Endothelial cell of umbilical vein (primary cell): ENCODE measurements at regions of chr20 and their contacts with region 1.

Region 1: DNA sequence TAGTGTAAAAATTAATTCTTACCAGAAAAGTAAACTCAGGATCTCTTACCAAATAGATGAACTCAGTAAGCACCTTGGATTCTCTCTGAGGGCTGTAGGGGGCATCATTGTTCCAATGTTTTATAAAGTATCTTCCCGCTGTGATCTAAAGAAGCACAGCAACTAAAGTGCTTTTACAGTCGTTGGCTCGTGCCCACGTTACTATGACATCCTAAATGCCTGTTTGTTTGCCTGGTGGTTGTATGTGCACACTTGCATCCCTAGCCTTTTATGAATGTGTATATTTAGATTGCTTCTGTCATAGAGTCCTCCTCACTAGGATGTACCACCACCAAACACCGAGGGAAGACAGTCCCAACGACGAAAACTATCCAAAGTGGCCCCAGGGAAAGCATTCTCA is 34.5 kb downstream of the SLX4IP start:
- DNase-seq: peak; percentile 90
- H3K4me3 ChIP-seq: no peak overlapping the region
- H3K27ac ChIP-seq: peak overlapping the region; percentile 9
- H3K4me1 ChIP-seq: peaks cover 40% of the 10 kb centered on the region
- H3K27me3 ChIP-seq: no peaks in the 10 kb centered on the region
- CTCF ChIP-seq: peak; percentile 49 to 50
- POLR2A ChIP-seq: no peak

Region 2: GRCh38 chr20:10434832-10435812 is 34.5 kb before region 1 on chr20 and contains the start of gene SLX4IP:
- CTCF ChIA-PET with region 1: interaction called, 7 read pairs
- POLR2A ChIA-PET with region 1: interaction called, 3 read pairs
- dilution Hi-C with region 1: no loop called
- intact Hi-C with region 1: loop called (anchors 1 kb)
- DNase-seq: peak; percentile 95
- H3K4me3 ChIP-seq: peak within 1 kb of the TSS; percentile 96 to 99 (median 97)
- H3K27ac ChIP-seq: peak within 1 kb of the TSS; percentile 97
- H3K4me1 ChIP-seq: peaks cover 15% of the 10 kb centered on the region
- H3K27me3 ChIP-seq: no peaks in the 10 kb centered on the region
- CTCF ChIP-seq: no peak
- POLR2A ChIP-seq: peak; percentile 63
- total RNA-seq, gene SLX4IP: 4.1 and 4.5 TPM in 2 replicates

Region 3: GRCh38 chr20:10449270-10449669 is 20.3 kb before region 1 on chr20:
- CTCF ChIA-PET with region 1: no interaction called
- POLR2A ChIA-PET with region 1: no interaction called
- dilution Hi-C with region 1: no loop called
- intact Hi-C with region 1: no loop called
- DNase-seq: no peak
- H3K4me3 ChIP-seq: no peak overlapping the region
- H3K27ac ChIP-seq: no peak overlapping the region
- H3K4me1 ChIP-seq: peaks cover 3% of the 10 kb centered on the region
- H3K27me3 ChIP-seq: no peaks in the 10 kb centered on the region
- CTCF ChIP-seq: no peak
- POLR2A ChIP-seq: no peak

Region 4: DNA sequence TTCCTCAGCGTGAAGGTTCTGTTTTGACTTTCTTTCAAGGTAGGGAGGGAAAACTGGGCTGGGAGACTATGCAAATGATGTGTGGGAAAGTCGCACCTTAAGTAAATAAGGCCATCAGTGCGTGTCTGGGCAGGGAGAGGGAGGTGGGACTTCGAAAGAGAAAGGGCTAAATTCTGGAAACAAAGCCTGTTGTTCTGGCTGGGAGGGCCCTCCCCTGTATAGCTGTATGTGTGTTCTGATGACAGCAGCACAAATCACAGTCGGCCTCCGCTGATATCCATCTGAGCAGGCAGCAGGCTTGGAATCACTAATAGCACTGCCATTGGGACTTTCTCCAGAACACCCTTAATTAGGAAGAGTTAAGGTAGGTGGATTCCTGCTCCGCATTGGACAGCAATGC is 185.0 kb after region 1 on chr20:
- CTCF ChIA-PET with region 1: no interaction called
- POLR2A ChIA-PET with region 1: no interaction called
- dilution Hi-C with region 1: no loop called
- intact Hi-C with region 1: loop called (anchors 5 kb)
- DNase-seq: peak; percentile 56
- H3K4me3 ChIP-seq: no peak overlapping the region
- H3K27ac ChIP-seq: peak overlapping the region; percentile 27
- H3K4me1 ChIP-seq: peaks cover 30% of the 10 kb centered on the region
- H3K27me3 ChIP-seq: no peaks in the 10 kb centered on the region
- CTCF ChIP-seq: no peak
- POLR2A ChIP-seq: no peak

Region 5: DNA sequence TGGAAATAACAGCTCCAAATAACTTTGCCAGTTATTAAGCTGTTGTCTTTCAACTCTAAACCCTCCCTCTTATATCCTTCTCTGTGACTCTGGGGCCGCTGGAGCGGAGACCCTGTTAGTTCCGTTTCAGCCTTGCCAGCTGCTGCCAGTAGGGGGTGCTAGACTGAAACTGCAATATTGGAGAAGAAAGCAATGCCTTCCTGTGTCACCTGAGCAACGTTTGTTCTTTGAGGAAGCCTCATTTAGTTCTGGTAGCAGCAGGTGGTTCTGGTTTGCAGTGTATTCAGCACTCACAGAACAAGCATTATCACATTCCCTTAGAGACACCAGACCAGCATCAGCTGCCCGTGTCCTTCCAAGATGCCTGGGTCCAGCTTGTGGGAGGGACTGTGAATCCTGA is 227.1 kb after region 1 on chr20:
- CTCF ChIA-PET with region 1: no interaction called
- POLR2A ChIA-PET with region 1: no interaction called
- dilution Hi-C with region 1: no loop called
- intact Hi-C with region 1: no loop called
- DNase-seq: no peak
- H3K4me3 ChIP-seq: no peak overlapping the region
- H3K27ac ChIP-seq: no peak overlapping the region
- H3K4me1 ChIP-seq: no peaks in the 10 kb centered on the region
- H3K27me3 ChIP-seq: no peaks in the 10 kb centered on the region
- CTCF ChIP-seq: peak; percentile 37 to 42
- POLR2A ChIP-seq: no peak

Region 6: GRCh38 chr20:11274141-11274594 is 804.6 kb after region 1 on chr20:
- CTCF ChIA-PET with region 1: interaction called, 3 read pairs
- POLR2A ChIA-PET with region 1: no interaction called
- dilution Hi-C with region 1: no loop called
- intact Hi-C with region 1: loop called (anchors 1 kb)
- DNase-seq: peak; percentile 74
- H3K4me3 ChIP-seq: no peak overlapping the region
- H3K27ac ChIP-seq: no peak overlapping the region
- H3K4me1 ChIP-seq: no peaks in the 10 kb centered on the region
- H3K27me3 ChIP-seq: no peaks in the 10 kb centered on the region
- CTCF ChIP-seq: peak; percentile 42 to 46
- POLR2A ChIP-seq: no peak

Region 7: GRCh38 chr20:11544029-11544678 is 1074.6 kb after region 1 on chr20:
- CTCF ChIA-PET with region 1: interaction called, 14 read pairs
- POLR2A ChIA-PET with region 1: no interaction called
- dilution Hi-C with region 1: no loop called
- intact Hi-C with region 1: loop called (anchors 1 kb)
- DNase-seq: peak; percentile 74
- H3K4me3 ChIP-seq: no peak overlapping the region
- H3K27ac ChIP-seq: no peak overlapping the region
- H3K4me1 ChIP-seq: peaks cover 9% of the 10 kb centered on the region
- H3K27me3 ChIP-seq: no peaks in the 10 kb centered on the region
- CTCF ChIP-seq: peak; percentile 16 to 44
- POLR2A ChIP-seq: no peak